Activated CD8-positive, alpha-beta memory T cell treated with anti-CD3 and anti-CD28 coated beads, Interleukin-2, amount 10 ng/mL, durations not matched to agents 7 days and 5 days (primary cell): ENCODE measurements at regions of chr6 and their contacts with region 1.

Region 1: DNA sequence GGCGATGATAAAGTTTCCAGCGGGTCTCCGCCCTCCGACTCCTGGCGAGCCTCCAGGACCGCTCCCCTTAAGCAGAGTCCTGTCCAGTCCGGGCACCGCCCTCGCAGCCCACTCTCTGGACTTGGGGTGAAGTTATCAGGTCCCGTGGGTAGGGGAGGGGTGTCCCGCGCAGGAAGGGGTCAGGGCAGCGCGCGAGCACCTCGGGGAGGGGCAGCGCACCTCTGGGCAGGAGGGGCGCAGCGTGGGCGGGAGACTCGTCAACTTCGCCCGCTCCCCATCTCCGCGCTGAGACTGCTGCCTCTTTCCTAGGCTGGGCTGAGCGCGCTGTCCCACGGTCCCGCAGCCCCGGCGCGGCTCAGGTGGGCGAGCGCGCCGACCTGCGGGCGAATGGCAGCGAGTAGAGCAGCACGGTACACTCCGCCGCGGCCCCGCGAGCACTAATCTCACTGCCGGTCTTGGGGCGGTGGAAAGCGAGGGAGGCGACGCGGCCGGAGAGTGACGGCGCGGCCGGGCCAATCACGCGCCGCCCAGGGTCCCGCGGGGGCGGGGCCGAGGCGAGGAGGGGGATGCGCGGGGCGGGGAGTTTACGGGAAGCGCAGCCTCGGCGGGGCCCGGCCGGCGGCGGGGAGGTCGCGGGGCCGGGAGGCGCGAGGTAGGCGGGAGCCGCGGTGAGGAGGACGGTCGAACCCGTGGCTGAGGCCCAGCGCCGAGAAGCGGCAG is at the start of gene MAN1A1:
- DNase-seq: peak; percentile 92
- ATAC-seq: peak; percentile 87
- H3K4me3 Mint-ChIP-seq: peak within 1 kb of the TSS; percentile 91
- H3K27ac Mint-ChIP-seq: peak within 1 kb of the TSS; percentile 89
- H3K4me1 Mint-ChIP-seq: peaks cover 41% of the 10 kb centered on the region
- H3K27me3 Mint-ChIP-seq: no peaks in the 10 kb centered on the region
- total RNA-seq, gene MAN1A1: 34.8 to 38.4 TPM

Region 2: DNA sequence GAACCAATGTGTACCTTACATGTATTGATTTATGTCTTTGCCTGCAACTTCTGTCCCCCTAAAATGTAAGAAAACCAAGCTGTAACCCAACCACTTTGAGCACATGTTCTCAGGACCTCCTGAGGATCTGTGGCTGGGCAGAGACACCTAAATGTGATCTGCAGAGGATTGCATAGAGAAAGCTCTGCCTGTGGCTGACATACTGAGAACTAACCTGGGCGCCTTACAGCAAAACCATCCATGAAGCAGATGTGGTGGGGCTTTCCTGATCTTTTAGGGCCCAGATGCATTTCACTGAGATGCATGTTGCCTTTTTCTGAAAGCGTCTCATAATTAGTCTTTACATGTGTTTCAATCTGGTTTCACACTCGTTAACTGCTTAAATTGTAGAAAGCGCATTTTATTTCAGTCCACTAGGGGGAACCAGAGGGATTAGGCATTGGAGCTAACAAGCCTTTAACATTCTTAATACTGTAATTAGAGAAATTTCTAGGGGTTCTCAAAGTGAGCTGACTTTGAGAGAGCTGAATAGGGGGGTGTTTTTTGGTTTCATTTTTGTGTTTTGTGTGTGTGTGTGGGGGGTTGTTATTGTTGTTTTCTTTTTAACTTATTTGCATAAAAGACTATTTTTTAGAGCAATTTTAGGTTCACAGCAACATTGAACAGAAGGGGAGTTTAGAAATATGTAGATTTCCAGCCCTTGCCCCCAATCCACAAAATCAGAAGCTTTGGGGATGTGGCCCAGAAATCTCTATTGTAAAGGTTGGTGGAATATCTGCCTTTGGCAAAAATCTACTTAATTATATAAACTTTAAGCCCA is 220.1 kb before region 1 on chr6:
- CTCF ChIA-PET with region 1: interaction called, 17 read pairs
- DNase-seq: no peak
- ATAC-seq: peak; percentile 76
- H3K4me3 Mint-ChIP-seq: no peak overlapping the region
- H3K27ac Mint-ChIP-seq: no peak overlapping the region
- H3K4me1 Mint-ChIP-seq: peaks cover 8% of the 10 kb centered on the region
- H3K27me3 Mint-ChIP-seq: peaks cover 2% of the 10 kb centered on the region

Region 3: GRCh38 chr6:119215885-119216590 is 133.4 kb before region 1 on chr6:
- CTCF ChIA-PET with region 1: no interaction called
- DNase-seq: no peak
- ATAC-seq: no peak
- H3K4me3 Mint-ChIP-seq: no peak overlapping the region
- H3K27ac Mint-ChIP-seq: no peak overlapping the region
- H3K4me1 Mint-ChIP-seq: no peaks in the 10 kb centered on the region
- H3K27me3 Mint-ChIP-seq: no peaks in the 10 kb centered on the region

Region 4: GRCh38 chr6:119333707-119334295 is 15.7 kb before region 1 on chr6:
- CTCF ChIA-PET with region 1: interaction called, 35 read pairs
- DNase-seq: no peak
- ATAC-seq: peak; percentile 54
- H3K4me3 Mint-ChIP-seq: no peak overlapping the region
- H3K27ac Mint-ChIP-seq: no peak overlapping the region
- H3K4me1 Mint-ChIP-seq: peaks cover 76% of the 10 kb centered on the region
- H3K27me3 Mint-ChIP-seq: no peaks in the 10 kb centered on the region